Posterior vena cava (tissue), 2 donors: ENCODE measurements at regions of chr2 and their contacts with region 1.

Region 1: DNA sequence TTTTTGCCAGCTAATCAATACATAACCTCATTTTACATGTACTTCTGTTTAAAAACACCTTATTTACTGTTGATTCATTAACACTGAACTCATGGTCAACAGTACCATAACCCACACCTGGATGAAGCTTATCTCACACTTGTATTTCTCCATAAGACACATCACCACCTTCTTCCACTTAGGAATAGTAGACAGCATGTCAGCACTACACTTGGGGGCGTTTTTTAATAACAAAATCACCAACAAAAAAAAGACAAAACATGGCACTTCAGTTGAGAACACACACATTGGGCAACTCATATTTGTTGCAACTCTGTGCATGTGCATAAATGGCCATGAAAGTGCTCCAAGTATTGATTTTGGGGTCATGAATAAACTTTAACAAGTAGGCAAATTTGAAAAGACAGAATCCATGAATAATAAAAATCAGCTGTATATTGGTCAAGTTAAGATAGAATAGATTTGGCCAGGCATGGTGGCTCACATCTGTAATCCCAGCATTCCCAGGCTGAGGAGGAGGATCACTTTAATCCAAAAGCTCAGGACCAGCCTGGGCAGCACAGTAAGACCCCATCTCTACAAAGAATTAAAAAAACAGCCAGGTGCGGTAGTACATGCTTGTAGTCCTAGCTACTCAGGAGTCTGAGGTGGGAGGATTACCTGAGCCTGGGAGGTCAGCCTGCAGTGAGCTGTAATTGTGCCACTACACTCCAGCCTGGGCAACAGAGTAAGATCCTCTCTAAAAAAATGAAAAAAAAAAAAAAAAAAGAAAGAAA is 84.4 kb upstream of the SRD5A2 start:
- DNase-seq: no peak

Region 2: GRCh38 chr2:31558401-31559295 is 106.5 kb before region 1 on chr2:
- intact Hi-C with region 1: no loop called
- DNase-seq: no peak

Region 3: GRCh38 chr2:31637161-31637560 is 28.0 kb before region 1 on chr2:
- intact Hi-C with region 1: no loop called
- DNase-seq: no peak

Region 4: DNA sequence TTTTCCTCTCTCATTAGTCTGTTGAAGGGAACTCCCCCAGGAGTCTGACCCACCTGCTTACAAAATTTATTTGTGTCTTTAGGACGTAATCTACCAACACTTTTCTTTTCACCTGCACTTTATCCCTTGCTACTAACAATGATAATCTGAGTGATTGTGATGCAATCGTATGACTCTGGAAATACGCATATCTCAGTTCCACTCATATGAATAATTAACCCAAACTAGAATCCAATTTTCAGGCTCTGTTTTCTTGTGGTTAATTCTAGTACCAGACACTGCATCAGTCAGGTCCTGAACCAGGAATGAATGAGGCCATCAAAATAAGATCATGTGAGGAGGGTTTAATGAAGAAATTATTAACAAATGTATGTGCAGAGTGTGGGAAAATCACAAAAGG is 74.0 kb after region 1 on chr2:
- intact Hi-C with region 1: loop called in 1 of 2 experiments (anchors 2 kb)
- DNase-seq: no peak